ENCODE measurements at regions of chr6 and their contacts with region 1.

Region 1: GRCh38 chr6:20947977-20948376 is 413.7 kb downstream of the CDKAL1 start:
- DNase-seq: no peak
- H3K4me3 ChIP-seq: no peak overlapping the region
- H3K27ac ChIP-seq: no peak overlapping the region
- H3K4me1 ChIP-seq: no peaks in the 10 kb centered on the region
- CTCF ChIP-seq: no peak

Region 2: DNA sequence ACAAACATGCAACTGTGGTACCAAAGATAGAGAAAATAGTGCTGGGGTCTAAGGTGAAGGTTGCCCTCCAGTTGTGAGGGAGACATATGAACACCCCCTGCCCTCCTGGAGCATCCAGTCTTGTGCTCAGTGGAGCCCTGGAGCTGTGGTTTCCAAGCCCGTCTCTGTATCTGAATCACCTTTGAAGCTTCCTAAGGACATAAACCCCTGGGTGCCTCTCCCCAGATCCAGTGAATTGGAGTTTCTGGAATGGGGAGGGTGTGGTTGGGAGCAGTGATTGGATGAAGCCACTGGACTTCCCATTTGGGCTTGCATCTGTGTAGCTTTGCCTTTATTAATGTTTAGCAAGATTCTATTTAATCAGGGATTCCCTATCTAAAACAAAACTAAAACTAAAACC is 568.7 kb before region 1 on chr6:
- CTCF ChIA-PET with region 1: no interaction called
- POLR2A ChIA-PET with region 1: no interaction called
- intact Hi-C with region 1: no loop called
- DNase-seq: no peak
- H3K4me3 ChIP-seq: no peak overlapping the region
- H3K27ac ChIP-seq: no peak overlapping the region
- H3K4me1 ChIP-seq: no peaks in the 10 kb centered on the region
- CTCF ChIP-seq: no peak

Region 3: GRCh38 chr6:20542927-20543602 is 404.9 kb before region 1 on chr6:
- CTCF ChIA-PET with region 1: no interaction called
- POLR2A ChIA-PET with region 1: no interaction called
- intact Hi-C with region 1: no loop called
- DNase-seq: no peak
- H3K4me3 ChIP-seq: no peak overlapping the region
- H3K27ac ChIP-seq: no peak overlapping the region
- H3K4me1 ChIP-seq: no peaks in the 10 kb centered on the region
- CTCF ChIP-seq: no peak

Region 4: DNA sequence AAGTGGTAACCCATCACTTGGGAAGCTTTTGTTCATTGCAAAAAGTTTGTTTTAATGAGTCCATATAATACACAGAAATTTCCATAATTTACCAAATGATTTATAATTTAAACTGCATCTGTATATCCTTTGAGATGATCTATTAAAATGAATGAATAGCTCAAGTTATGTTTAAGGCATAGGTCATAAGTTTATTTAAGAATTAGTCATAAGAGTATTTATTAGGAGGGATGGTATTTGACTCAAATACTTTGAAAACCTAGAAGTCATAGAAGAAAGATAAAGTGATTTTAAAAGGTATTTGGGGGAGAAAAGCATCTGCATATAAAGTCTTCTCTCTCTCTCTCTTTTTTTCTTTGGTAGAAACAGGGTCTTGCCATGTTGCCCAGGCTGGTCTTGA is 25.2 kb before region 1 on chr6:
- CTCF ChIA-PET with region 1: no interaction called
- POLR2A ChIA-PET with region 1: interaction called, 10 read pairs
- intact Hi-C with region 1: no loop called
- DNase-seq: no peak
- H3K4me3 ChIP-seq: no peak overlapping the region
- H3K27ac ChIP-seq: no peak overlapping the region
- H3K4me1 ChIP-seq: no peaks in the 10 kb centered on the region
- CTCF ChIP-seq: no peak